CD8-positive, alpha-beta T cell (primary cell): ENCODE measurements at regions of chr16 and their contacts with region 1.

Region 1: GRCh38 chr16:56576585-56577293 is 11.9 kb downstream of the MT4 start:
- DNase-seq: peak; percentile 77 to 91 (median 85)
- ATAC-seq: peak; percentile 99
- H3K4me3 ChIP-seq: no peak overlapping the region
- H3K4me3 Mint-ChIP-seq: no peak overlapping the region
- H3K27ac ChIP-seq: no peak overlapping the region
- H3K27ac Mint-ChIP-seq: peak overlapping the region; percentile 72
- H3K4me1 ChIP-seq: peaks cover 4% of the 10 kb centered on the region
- H3K4me1 Mint-ChIP-seq: peaks cover 8% of the 10 kb centered on the region
- H3K27me3 ChIP-seq: no peaks in the 10 kb centered on the region
- H3K27me3 Mint-ChIP-seq: no peaks in the 10 kb centered on the region
- CTCF ChIP-seq: peak; percentile 82

Region 2: DNA sequence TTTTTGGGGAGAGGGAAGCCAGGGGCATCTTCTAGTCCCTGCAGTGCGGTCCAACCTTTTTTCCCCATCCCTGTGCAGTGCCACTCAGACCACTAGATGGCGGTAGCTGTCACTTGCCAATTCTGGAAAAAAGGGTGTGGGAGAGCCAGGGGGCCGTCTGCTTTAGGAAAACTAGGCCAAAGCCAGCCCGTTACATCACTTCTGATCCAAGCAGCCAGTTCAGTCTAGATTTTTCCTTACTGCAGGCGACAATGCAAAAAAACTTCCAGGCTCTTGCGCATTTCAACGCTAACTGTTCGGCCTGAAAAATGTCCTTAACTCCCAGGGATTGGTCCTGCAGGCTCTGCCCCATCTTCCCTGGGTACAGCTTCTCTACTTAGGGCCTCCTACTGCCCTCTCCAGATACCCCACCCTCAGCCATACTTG is 632.3 kb before region 1 on chr16:
- CTCF ChIA-PET with region 1: no interaction called
- POLR2A ChIA-PET with region 1: no interaction called
- intact Hi-C with region 1: loop called in 1 of 2 experiments (anchors 10 kb)
- DNase-seq: peak; percentile 8 to 70 (median 50)
- ATAC-seq: no peak
- H3K4me3 ChIP-seq: no peak overlapping the region
- H3K4me3 Mint-ChIP-seq: no peak overlapping the region
- H3K27ac ChIP-seq: no peak overlapping the region
- H3K27ac Mint-ChIP-seq: no peak overlapping the region
- H3K4me1 ChIP-seq: no peaks in the 10 kb centered on the region
- H3K4me1 Mint-ChIP-seq: no peaks in the 10 kb centered on the region
- H3K27me3 ChIP-seq: no peaks in the 10 kb centered on the region
- H3K27me3 Mint-ChIP-seq: peaks cover 44% of the 10 kb centered on the region
- CTCF ChIP-seq: peak; percentile 87

Region 3: GRCh38 chr16:56356276-56357240 is 220.2 kb before region 1 on chr16:
- CTCF ChIA-PET with region 1: no interaction called
- POLR2A ChIA-PET with region 1: no interaction called
- intact Hi-C with region 1: no loop called
- DNase-seq: peak; percentile 33 to 76 (median 54)
- ATAC-seq: peak; percentile 75
- H3K4me3 ChIP-seq: peak overlapping the region; percentile 55 to 60
- H3K4me3 Mint-ChIP-seq: peak overlapping the region; percentile 87
- H3K27ac ChIP-seq: peak overlapping the region; percentile 43 to 48
- H3K27ac Mint-ChIP-seq: peak overlapping the region; percentile 88
- H3K4me1 ChIP-seq: peaks cover 8% of the 10 kb centered on the region
- H3K4me1 Mint-ChIP-seq: peaks cover 21% of the 10 kb centered on the region
- H3K27me3 ChIP-seq: no peaks in the 10 kb centered on the region
- H3K27me3 Mint-ChIP-seq: no peaks in the 10 kb centered on the region
- CTCF ChIP-seq: peak; percentile 66

Region 4: DNA sequence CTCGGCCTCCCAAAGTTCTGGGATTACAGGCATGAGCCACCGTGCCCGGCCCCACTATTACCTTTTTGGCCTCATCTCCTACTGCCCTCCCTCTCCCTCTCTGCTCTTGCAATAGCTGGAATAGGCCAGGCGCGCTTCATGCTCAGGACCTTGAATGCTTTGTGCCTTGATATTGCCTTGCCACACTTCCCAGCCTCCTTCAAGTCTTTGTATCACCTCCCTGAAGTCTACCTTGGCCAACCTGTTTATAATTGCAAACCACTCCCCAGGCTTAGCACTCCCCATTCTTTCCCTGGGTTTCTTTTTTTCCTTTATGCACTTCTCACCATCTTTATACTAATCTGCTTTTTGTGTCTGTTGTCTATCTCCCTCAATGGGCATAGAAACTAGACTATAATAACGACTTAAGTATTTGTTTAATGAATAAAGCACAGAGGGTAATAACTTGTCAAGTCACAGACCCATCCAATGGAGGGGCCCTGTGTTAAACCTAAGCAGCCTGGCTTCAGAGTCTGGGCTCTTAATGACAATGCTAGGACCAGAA is 118.7 kb before region 1 on chr16:
- CTCF ChIA-PET with region 1: no interaction called
- POLR2A ChIA-PET with region 1: no interaction called
- intact Hi-C with region 1: no loop called
- DNase-seq: no peak
- ATAC-seq: no peak
- H3K4me3 ChIP-seq: no peak overlapping the region
- H3K4me3 Mint-ChIP-seq: no peak overlapping the region
- H3K27ac ChIP-seq: no peak overlapping the region
- H3K27ac Mint-ChIP-seq: no peak overlapping the region
- H3K4me1 ChIP-seq: peaks cover 3% of the 10 kb centered on the region
- H3K4me1 Mint-ChIP-seq: peaks cover 13% of the 10 kb centered on the region
- H3K27me3 ChIP-seq: no peaks in the 10 kb centered on the region
- H3K27me3 Mint-ChIP-seq: no peaks in the 10 kb centered on the region
- CTCF ChIP-seq: no peak

Region 5: GRCh38 chr16:56564773-56565477 is 11.8 kb before region 1 on chr16 and contains the start of gene MT4:
- CTCF ChIA-PET with region 1: interaction called, 23 read pairs
- POLR2A ChIA-PET with region 1: no interaction called
- intact Hi-C with region 1: no loop called
- DNase-seq: no peak
- ATAC-seq: no peak
- H3K4me3 ChIP-seq: no peak within 1 kb of the TSS
- H3K4me3 Mint-ChIP-seq: no peak within 1 kb of the TSS
- H3K27ac ChIP-seq: no peak within 1 kb of the TSS
- H3K27ac Mint-ChIP-seq: no peak within 1 kb of the TSS
- H3K4me1 ChIP-seq: no peaks in the 10 kb centered on the region
- H3K4me1 Mint-ChIP-seq: no peaks in the 10 kb centered on the region
- H3K27me3 ChIP-seq: no peaks in the 10 kb centered on the region
- H3K27me3 Mint-ChIP-seq: peaks cover 5% of the 10 kb centered on the region
- CTCF ChIP-seq: no peak
- total RNA-seq, gene MT4: not detected

Region 6: DNA sequence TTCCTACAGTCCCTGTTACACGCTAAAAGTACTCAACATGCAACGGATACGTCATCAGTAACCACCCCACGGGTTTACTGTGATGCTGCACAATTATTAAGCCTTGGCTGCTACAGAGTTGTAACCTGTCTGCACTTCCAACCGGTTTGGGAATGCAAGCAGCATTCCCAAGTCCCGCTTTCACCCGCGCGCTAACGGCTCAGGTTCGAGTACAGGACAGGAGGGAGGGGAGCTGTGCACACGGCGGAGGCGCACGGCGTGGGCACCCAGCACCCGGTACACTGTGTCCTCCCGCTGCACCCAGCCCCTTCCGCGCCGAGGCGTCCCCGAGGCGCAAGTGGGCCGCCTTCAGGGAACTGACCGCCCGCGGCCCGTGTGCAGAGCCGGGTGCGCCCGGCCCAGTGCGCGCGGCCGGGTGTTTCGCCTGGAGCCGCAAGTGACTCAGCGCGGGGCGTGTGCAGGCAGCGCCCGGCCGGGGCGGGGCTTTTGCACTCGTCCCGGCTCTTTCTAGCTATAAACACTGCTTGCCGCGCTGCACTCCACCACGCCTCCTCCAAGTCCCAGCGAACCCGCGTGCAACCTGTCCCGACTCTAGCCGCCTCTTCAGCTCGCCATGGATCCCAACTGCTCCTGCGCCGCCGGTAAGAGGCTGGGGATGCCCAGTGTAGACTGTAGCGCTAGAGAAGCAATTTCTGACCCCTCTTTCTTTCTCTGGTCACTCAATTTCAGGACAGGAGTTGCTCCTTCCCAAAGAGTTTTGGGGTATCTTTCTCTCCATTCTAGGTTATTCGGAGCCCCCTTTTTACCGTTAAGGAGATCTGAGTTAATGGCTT is 31.5 kb after region 1 on chr16 and contains the start of gene MT2A:
- CTCF ChIA-PET with region 1: interaction called, 23 read pairs
- POLR2A ChIA-PET with region 1: no interaction called
- intact Hi-C with region 1: loop called in 1 of 2 experiments (anchors 1 kb)
- DNase-seq: peak; percentile 68 to 94 (median 88)
- ATAC-seq: peak; percentile 75
- H3K4me3 ChIP-seq: peak within 1 kb of the TSS; percentile 91 to 95
- H3K4me3 Mint-ChIP-seq: peak within 1 kb of the TSS; percentile 98
- H3K27ac ChIP-seq: peak within 1 kb of the TSS; percentile 68 to 98
- H3K27ac Mint-ChIP-seq: peak within 1 kb of the TSS; percentile 94
- H3K4me1 ChIP-seq: peaks cover 37% of the 10 kb centered on the region
- H3K4me1 Mint-ChIP-seq: peaks cover 47% of the 10 kb centered on the region
- H3K27me3 ChIP-seq: no peaks in the 10 kb centered on the region
- H3K27me3 Mint-ChIP-seq: no peaks in the 10 kb centered on the region
- CTCF ChIP-seq: no peak
- total RNA-seq, gene MT2A: 71.0 to 95.7 TPM

Region 7: GRCh38 chr16:56700195-56700594 is 123.5 kb after region 1 on chr16:
- CTCF ChIA-PET with region 1: interaction called, 129 read pairs
- POLR2A ChIA-PET with region 1: interaction called, 8 read pairs
- intact Hi-C with region 1: loop called (anchors 1 kb)
- DNase-seq: no peak
- ATAC-seq: no peak
- H3K4me3 ChIP-seq: no peak overlapping the region
- H3K4me3 Mint-ChIP-seq: no peak overlapping the region
- H3K27ac ChIP-seq: no peak overlapping the region
- H3K27ac Mint-ChIP-seq: no peak overlapping the region
- H3K4me1 ChIP-seq: peaks cover 4% of the 10 kb centered on the region
- H3K4me1 Mint-ChIP-seq: peaks cover 11% of the 10 kb centered on the region
- H3K27me3 ChIP-seq: no peaks in the 10 kb centered on the region
- H3K27me3 Mint-ChIP-seq: no peaks in the 10 kb centered on the region
- CTCF ChIP-seq: no peak

Region 8: DNA sequence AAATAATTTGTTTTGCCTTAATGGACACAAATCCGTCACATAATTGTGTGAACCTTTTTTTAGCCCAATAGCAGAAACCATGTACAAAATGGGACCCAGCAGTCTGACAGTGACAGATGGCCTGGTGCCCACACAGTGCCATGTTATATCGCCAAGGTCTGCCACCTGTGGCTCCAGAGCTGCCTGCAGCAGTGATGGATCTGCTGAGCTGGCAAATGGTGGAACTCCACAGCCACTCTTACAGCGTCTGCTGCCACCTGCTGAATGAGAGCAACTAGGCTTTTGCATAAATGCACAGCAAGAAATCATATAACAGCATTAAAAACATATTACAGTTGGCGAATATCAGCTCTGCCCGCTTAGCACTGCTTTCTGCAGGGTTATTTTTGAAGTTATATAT is 212.6 kb after region 1 on chr16:
- CTCF ChIA-PET with region 1: interaction called, 20 read pairs
- POLR2A ChIA-PET with region 1: no interaction called
- intact Hi-C with region 1: loop called (anchors 1 to 2 kb)
- DNase-seq: peak in 4 of 9 experiments; percentile 5 to 50 (median 44)
- ATAC-seq: peak; percentile 55
- H3K4me3 ChIP-seq: no peak overlapping the region
- H3K4me3 Mint-ChIP-seq: no peak overlapping the region
- H3K27ac ChIP-seq: no peak overlapping the region
- H3K27ac Mint-ChIP-seq: no peak overlapping the region
- H3K4me1 ChIP-seq: no peaks in the 10 kb centered on the region
- H3K4me1 Mint-ChIP-seq: peaks cover 3% of the 10 kb centered on the region
- H3K27me3 ChIP-seq: no peaks in the 10 kb centered on the region
- H3K27me3 Mint-ChIP-seq: no peaks in the 10 kb centered on the region
- CTCF ChIP-seq: peak; percentile 23

Region 9: DNA sequence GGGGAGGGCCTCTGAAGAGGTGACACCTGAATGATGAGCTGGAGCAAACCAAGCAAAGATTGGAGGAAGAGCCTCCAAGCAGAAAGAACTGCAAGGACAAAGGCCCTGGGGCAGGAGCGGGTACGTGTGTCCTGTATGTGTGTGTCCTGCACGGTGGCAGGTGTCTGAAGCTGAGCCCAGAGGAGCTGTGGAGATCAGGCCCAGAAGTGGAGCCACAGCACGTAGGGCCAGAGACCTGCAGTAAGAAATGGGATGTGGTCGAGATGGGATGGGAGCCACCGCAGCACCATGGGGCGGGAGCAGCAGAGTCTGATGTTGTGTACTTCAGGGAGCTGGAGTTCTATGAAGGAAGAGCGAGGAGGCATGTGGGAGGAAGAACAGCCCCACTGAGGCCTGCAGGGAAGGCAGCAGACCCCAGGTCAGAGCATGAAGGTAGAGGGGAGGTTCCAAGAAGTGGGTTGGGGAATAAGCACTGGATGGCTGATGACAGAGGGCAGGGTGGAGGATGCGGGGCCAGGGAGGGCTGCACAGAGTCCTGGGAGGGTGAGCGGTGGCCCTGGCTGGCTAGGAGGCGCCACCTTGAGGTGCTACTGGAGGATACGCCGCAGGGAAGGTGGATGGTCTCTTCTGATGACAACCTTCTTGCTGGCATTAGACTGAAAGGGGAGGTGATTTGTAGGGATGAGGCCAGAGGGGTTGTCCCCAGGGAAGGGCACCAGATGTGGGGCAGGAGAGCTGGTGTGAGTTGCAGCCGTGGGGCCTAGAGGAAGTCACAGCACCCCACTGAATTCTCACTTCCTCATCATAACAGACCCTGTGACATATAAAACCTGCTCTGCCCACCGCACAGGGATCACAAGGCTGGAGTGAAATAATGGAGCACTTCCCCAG is 374.4 kb after region 1 on chr16:
- CTCF ChIA-PET with region 1: no interaction called
- POLR2A ChIA-PET with region 1: interaction called, 3 read pairs
- intact Hi-C with region 1: loop called (anchors 1 to 10 kb)
- DNase-seq: peak in 8 of 9 experiments; percentile 43 to 72 (median 56)
- ATAC-seq: peak; percentile 94
- H3K4me3 ChIP-seq: no peak overlapping the region
- H3K4me3 Mint-ChIP-seq: no peak overlapping the region
- H3K27ac ChIP-seq: no peak overlapping the region
- H3K27ac Mint-ChIP-seq: no peak overlapping the region
- H3K4me1 ChIP-seq: no peaks in the 10 kb centered on the region
- H3K4me1 Mint-ChIP-seq: peaks cover 12% of the 10 kb centered on the region
- H3K27me3 ChIP-seq: no peaks in the 10 kb centered on the region
- H3K27me3 Mint-ChIP-seq: no peaks in the 10 kb centered on the region
- CTCF ChIP-seq: peak; percentile 61